ENCODE measurements at regions of chr13 and their contacts with region 1.

Region 1: GRCh38 chr13:41019011-41019487 is at the start of gene ELF1:
- DNase-seq: peak; percentile 70 to 71
- H3K4me3 ChIP-seq: peak within 1 kb of the TSS; percentile 26
- H3K4me3 Mint-ChIP-seq: peak within 1 kb of the TSS; percentile 75
- H3K27ac Mint-ChIP-seq: peak within 1 kb of the TSS; percentile 88
- H3K4me1 ChIP-seq: peaks cover 57% of the 10 kb centered on the region
- H3K4me1 Mint-ChIP-seq: peaks cover 53% of the 10 kb centered on the region
- H3K27me3 ChIP-seq: no peaks in the 10 kb centered on the region
- H3K27me3 Mint-ChIP-seq: no peaks in the 10 kb centered on the region
- CTCF ChIP-seq: no peak
- total RNA-seq, gene ELF1: 108 and 116 TPM in 2 replicates

Region 2: GRCh38 chr13:40974460-40975407 is 44.3 kb before region 1 on chr13:
- CTCF ChIA-PET with region 1: interaction called, 3 read pairs
- POLR2A ChIA-PET with region 1: no interaction called
- intact Hi-C with region 1: loop called (anchors 1 kb)
- DNase-seq: peak; percentile 70 to 71
- H3K4me3 ChIP-seq: no peak overlapping the region
- H3K4me3 Mint-ChIP-seq: peak overlapping the region; percentile 47
- H3K27ac Mint-ChIP-seq: peak overlapping the region; percentile 69
- H3K4me1 ChIP-seq: peaks cover 70% of the 10 kb centered on the region
- H3K4me1 Mint-ChIP-seq: peaks cover 63% of the 10 kb centered on the region
- H3K27me3 ChIP-seq: no peaks in the 10 kb centered on the region
- H3K27me3 Mint-ChIP-seq: no peaks in the 10 kb centered on the region
- CTCF ChIP-seq: peak; percentile 65 to 67

Region 3: GRCh38 chr13:41061075-41061913 is 42.2 kb after region 1 on chr13 and contains the start of gene WBP4:
- CTCF ChIA-PET with region 1: interaction called, 4 read pairs
- POLR2A ChIA-PET with region 1: interaction called, 3 read pairs
- intact Hi-C with region 1: loop called (anchors 1 kb)
- DNase-seq: peak; percentile 97 to 99
- H3K4me3 ChIP-seq: peak within 1 kb of the TSS; percentile 76
- H3K4me3 Mint-ChIP-seq: peak within 1 kb of the TSS; percentile 95
- H3K27ac Mint-ChIP-seq: peak within 1 kb of the TSS; percentile 99
- H3K4me1 ChIP-seq: peaks cover 56% of the 10 kb centered on the region
- H3K4me1 Mint-ChIP-seq: peaks cover 43% of the 10 kb centered on the region
- H3K27me3 ChIP-seq: no peaks in the 10 kb centered on the region
- H3K27me3 Mint-ChIP-seq: no peaks in the 10 kb centered on the region
- CTCF ChIP-seq: no peak
- total RNA-seq, gene WBP4: 12.9 and 13.6 TPM in 2 replicates

Region 4: DNA sequence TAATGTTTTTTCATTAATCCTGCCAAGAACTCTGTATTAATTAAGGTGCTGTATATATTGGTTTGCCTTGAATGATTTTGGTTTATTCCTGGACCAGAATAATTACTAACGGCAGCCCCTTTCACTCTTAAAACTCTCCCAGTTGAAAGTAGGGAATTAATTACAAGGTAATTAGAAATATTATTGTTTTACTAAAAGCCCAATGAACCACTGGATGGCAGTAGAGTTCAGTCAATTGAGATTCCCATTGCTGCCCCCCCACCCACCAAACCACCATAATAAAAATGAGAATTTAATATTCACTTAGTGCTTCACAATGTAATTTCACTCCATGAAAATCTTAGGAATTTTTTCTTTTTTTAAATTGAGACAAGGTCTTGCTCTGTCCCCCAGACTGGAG is 56.0 kb after region 1 on chr13:
- CTCF ChIA-PET with region 1: no interaction called
- POLR2A ChIA-PET with region 1: no interaction called
- intact Hi-C with region 1: no loop called
- DNase-seq: peak in 1 of 2 experiments; percentile 41
- H3K4me3 ChIP-seq: no peak overlapping the region
- H3K4me3 Mint-ChIP-seq: no peak overlapping the region
- H3K27ac Mint-ChIP-seq: no peak overlapping the region
- H3K4me1 ChIP-seq: no peaks in the 10 kb centered on the region
- H3K4me1 Mint-ChIP-seq: no peaks in the 10 kb centered on the region
- H3K27me3 ChIP-seq: no peaks in the 10 kb centered on the region
- H3K27me3 Mint-ChIP-seq: no peaks in the 10 kb centered on the region
- CTCF ChIP-seq: peak; percentile 36 to 68